H1 (cell line): ENCODE measurements at regions of chr6 and their contacts with region 1.

Region 1: DNA sequence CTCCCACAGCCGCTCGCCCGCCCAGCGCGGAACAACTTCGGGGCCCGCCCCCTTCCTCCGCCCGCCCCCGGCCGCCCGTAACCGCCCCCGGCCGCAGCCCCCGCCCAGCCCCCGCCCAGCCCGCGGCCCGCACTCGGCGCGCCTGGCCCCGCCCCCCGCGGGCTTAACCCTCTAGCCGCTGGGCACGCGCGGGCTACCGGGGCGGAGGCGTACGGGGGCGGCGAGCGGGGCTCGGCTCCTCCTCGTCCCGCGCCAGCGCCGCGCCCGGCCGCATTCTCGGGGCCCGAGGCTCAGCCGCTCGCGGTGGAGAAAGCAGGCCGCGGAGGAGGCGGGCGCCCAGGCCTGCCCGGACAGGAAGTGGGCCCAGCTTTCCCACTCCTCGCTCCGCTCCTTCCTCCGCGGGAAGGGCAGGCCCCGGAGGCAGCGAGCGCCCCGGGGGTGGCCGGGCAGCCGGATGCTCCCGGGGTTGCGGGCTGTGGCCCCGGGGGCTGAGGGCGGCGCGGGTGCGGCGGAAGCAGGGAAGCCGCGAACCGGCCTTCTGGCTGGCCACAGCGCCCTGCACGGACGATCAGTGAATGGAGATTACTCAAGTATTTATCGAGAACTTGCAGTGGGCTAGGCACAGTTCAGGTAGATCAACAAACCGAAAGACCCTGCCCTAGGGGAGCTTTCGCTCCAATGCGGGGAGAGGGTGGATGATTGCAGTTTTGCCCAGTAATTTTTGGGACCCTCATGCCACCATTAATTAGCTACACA is at the start of gene TRAM2:
- DNase-seq: peak in 1 of 2 experiments; percentile 85
- H3K4me3 ChIP-seq: peak within 1 kb of the TSS; percentile 70 to 93 (median 86)
- H3K27ac ChIP-seq: peak within 1 kb of the TSS; percentile 86
- H3K4me1 ChIP-seq: peaks cover 14 to 28% (median 21%) of the 10 kb centered on the region in 4 experiments
- H3K27me3 ChIP-seq: no peaks in the 10 kb centered on the region
- CTCF ChIP-seq: peak in 1 of 3 experiments; percentile 20; a peak in 2 of 4 replicates
- EP300 ChIP-seq: no peak
- POLR2A ChIP-seq: peak; percentile 70 to 87
- RAD21 ChIP-seq: peak in 1 of 2 experiments; percentile 14; a peak in 1 of 4 replicates
- total RNA-seq, gene TRAM2: 21.4 and 21.6 TPM in 2 replicates

Region 2: GRCh38 chr6:52551401-52552277 is 25.6 kb before region 1 on chr6:
- CTCF ChIA-PET with region 1: interaction called, 10 read pairs
- POLR2A ChIA-PET with region 1: interaction called, 7 read pairs
- DNase-seq: peak in 1 of 2 experiments; percentile 70
- H3K4me3 ChIP-seq: peak overlapping the region in 3 of 4 experiments; percentile 10 to 43 (median 23); a peak in 4 of 8 replicates
- H3K27ac ChIP-seq: peak overlapping the region; percentile 40; the same call in 1 of the 2 replicates
- H3K4me1 ChIP-seq: peaks cover 11 to 17% (median 12%) of the 10 kb centered on the region in 4 experiments
- H3K27me3 ChIP-seq: no peaks in the 10 kb centered on the region
- CTCF ChIP-seq: peak in 1 of 3 experiments; percentile 4; a peak in 2 of 4 replicates
- EP300 ChIP-seq: no peak
- POLR2A ChIP-seq: no peak
- RAD21 ChIP-seq: peak; percentile 37 to 47; a peak in 2 of 4 replicates

Region 3: DNA sequence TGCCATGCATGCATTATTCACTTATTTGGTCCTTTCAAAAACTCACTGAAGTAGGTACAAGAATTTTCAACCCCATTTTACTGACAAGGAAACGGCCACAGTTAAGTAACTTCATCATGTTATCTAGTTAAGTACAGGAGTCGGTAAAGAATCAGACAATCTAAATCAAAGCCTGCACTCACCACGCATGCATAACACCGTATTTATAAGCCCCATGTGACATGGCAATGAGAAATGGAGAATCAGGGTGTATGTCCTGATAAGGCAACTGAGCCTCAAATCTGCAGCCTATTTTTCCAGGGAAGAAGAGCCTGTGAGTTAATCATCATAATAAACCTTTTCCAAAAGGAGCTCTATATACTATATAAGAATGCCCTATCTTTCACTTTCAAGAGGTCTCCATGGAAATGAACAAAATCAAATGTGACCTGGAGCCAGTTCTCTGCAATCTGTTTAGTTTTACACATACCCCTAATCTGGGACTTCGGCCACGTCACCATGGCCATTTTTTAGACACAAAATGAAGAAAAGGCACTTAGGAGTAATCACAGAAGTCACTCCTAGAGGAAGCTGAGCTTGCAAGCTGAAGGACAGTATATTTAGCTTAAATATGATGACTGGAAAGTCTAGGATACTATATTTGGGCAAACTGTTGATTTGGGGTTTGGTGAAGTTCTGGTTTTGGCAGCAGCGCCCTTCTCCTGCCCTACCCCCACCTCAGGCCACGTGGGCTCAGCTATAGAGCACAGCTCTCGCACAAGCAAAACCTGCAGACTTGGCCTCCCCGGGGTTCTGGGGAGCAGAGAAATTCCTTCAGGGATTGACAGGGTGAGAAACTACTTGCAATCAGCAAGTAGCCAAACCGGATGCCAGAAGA is 19.6 kb before region 1 on chr6:
- CTCF ChIA-PET with region 1: interaction called, 11 read pairs
- POLR2A ChIA-PET with region 1: interaction called, 9 read pairs
- DNase-seq: peak in 1 of 2 experiments; percentile 58
- H3K4me3 ChIP-seq: no peak overlapping the region; a peak in 1 of 8 replicates
- H3K27ac ChIP-seq: no peak overlapping the region
- H3K4me1 ChIP-seq: peaks cover 1 to 16% (median 13%) of the 10 kb centered on the region in 4 experiments; a peak in 6 of 7 replicates
- H3K27me3 ChIP-seq: no peaks in the 10 kb centered on the region
- CTCF ChIP-seq: no peak
- EP300 ChIP-seq: no peak
- POLR2A ChIP-seq: no peak
- RAD21 ChIP-seq: no peak

Region 4: GRCh38 chr6:52566853-52567279 is 10.3 kb before region 1 on chr6:
- CTCF ChIA-PET with region 1: interaction called, 19 read pairs
- POLR2A ChIA-PET with region 1: interaction called, 7 read pairs
- DNase-seq: no peak
- H3K4me3 ChIP-seq: no peak overlapping the region
- H3K27ac ChIP-seq: no peak overlapping the region
- H3K4me1 ChIP-seq: peaks cover 0 to 15% (median 2%) of the 10 kb centered on the region in 4 experiments; a peak in 3 of 7 replicates
- H3K27me3 ChIP-seq: no peaks in the 10 kb centered on the region
- CTCF ChIP-seq: no peak
- EP300 ChIP-seq: no peak
- POLR2A ChIP-seq: no peak
- RAD21 ChIP-seq: no peak

Region 5: DNA sequence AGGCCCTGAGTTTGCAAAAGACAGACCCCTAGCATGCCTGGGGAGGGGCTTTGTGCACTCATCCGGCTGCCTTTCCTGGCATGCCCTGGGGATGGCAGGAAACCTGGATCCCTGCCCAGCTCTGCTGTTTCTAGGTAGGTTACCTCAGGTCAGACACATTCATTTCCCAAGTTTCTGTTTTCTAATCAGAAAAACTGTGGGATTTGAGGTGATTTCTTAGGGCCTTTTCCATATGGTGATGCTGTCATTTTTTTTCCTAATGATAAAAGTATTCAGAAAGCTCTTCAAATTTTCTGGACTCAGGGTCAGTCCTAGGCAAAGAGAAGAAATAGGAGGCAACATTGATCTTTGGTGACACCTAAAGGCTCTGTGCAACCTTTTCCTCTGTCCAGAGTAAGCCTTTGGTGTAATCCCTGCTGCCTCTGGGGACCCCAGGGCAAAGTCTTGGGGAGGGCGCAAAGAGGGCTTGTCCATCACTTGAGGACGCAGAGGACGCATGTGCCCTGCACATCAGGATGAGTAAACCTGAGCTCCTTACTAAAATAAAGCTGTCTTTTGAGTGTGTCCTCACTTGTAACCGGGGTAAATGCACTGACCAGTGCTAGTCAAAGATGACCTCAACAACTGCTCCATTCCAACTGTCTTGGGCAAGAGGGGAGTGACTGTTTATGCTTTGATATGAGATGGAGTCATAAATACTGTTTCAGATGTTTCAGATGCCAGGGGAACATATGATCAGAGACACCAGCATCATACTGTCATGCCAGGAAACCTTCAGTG is 13.1 kb after region 1 on chr6:
- CTCF ChIA-PET with region 1: interaction called, 85 read pairs
- POLR2A ChIA-PET with region 1: interaction called, 13 read pairs
- DNase-seq: no peak
- H3K4me3 ChIP-seq: no peak overlapping the region
- H3K27ac ChIP-seq: no peak overlapping the region
- H3K4me1 ChIP-seq: peaks cover 0 to 8% (median under 1%) of the 10 kb centered on the region in 4 experiments; a peak in 3 of 7 replicates
- H3K27me3 ChIP-seq: no peaks in the 10 kb centered on the region
- CTCF ChIP-seq: peak in 1 of 3 experiments; percentile 9; a peak in 1 of 4 replicates
- EP300 ChIP-seq: no peak
- POLR2A ChIP-seq: no peak
- RAD21 ChIP-seq: peak; percentile 34 to 37